Caco-2 (cell line): ENCODE measurements at regions of chr13 and their contacts with region 1.

Region 1: GRCh38 chr13:106418556-106418955 is 116.9 kb downstream of the EFNB2 start:
- DNase-seq: no peak
- H3K4me3 ChIP-seq: no peak overlapping the region
- H3K4me3 Mint-ChIP-seq: no peak overlapping the region
- H3K27ac Mint-ChIP-seq: no peak overlapping the region
- H3K4me1 ChIP-seq: peaks cover 4% of the 10 kb centered on the region; the same call in 1 of the 2 replicates
- H3K4me1 Mint-ChIP-seq: peaks cover 8% of the 10 kb centered on the region
- H3K27me3 ChIP-seq: no peaks in the 10 kb centered on the region
- H3K27me3 Mint-ChIP-seq: no peaks in the 10 kb centered on the region
- CTCF ChIP-seq: no peak

Region 2: GRCh38 chr13:105960326-105960725 is 458.2 kb before region 1 on chr13:
- CTCF ChIA-PET with region 1: no interaction called
- POLR2A ChIA-PET with region 1: no interaction called
- intact Hi-C with region 1: no loop called
- DNase-seq: no peak
- H3K4me3 ChIP-seq: no peak overlapping the region
- H3K4me3 Mint-ChIP-seq: no peak overlapping the region
- H3K27ac Mint-ChIP-seq: no peak overlapping the region
- H3K4me1 ChIP-seq: no peaks in the 10 kb centered on the region
- H3K4me1 Mint-ChIP-seq: no peaks in the 10 kb centered on the region
- H3K27me3 ChIP-seq: no peaks in the 10 kb centered on the region
- H3K27me3 Mint-ChIP-seq: no peaks in the 10 kb centered on the region
- CTCF ChIP-seq: no peak

Region 3: DNA sequence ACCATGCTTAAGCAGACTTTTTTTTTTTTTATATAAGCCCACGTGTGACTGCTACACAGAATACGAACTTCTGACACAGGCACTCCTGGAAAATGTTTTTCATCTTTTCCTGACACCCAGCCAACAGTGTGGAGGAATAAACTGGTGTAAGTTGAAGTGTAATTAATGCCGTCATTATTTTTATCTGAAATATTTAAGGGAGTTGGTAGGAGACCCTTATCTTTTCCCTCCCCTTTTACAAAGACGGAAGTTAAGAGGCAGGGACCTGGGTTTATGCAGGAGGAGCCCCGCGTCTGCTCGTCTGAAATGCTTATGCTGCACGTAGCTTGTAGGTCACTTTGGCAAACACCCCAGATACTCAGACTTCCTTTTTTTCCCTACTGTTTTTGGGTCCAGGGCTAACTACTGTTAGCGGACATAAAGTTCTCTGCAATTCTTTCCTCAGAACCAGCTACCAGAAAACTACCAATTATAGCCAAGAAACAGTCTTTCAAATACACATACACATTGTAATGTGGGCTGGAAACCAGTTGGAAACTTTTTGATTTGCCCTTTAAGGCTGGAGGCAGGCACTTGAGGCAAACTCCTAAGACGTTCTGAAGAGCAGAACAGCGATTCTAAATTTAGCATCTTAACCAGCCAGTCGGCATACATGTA is 66.1 kb after region 1 on chr13:
- CTCF ChIA-PET with region 1: no interaction called
- POLR2A ChIA-PET with region 1: no interaction called
- intact Hi-C with region 1: loop called (anchors 5 kb)
- DNase-seq: no peak
- H3K4me3 ChIP-seq: no peak overlapping the region
- H3K4me3 Mint-ChIP-seq: no peak overlapping the region
- H3K27ac Mint-ChIP-seq: no peak overlapping the region
- H3K4me1 ChIP-seq: peaks cover 17% of the 10 kb centered on the region
- H3K4me1 Mint-ChIP-seq: peaks cover 6% of the 10 kb centered on the region
- H3K27me3 ChIP-seq: no peaks in the 10 kb centered on the region
- H3K27me3 Mint-ChIP-seq: no peaks in the 10 kb centered on the region
- CTCF ChIP-seq: no peak

Region 4: DNA sequence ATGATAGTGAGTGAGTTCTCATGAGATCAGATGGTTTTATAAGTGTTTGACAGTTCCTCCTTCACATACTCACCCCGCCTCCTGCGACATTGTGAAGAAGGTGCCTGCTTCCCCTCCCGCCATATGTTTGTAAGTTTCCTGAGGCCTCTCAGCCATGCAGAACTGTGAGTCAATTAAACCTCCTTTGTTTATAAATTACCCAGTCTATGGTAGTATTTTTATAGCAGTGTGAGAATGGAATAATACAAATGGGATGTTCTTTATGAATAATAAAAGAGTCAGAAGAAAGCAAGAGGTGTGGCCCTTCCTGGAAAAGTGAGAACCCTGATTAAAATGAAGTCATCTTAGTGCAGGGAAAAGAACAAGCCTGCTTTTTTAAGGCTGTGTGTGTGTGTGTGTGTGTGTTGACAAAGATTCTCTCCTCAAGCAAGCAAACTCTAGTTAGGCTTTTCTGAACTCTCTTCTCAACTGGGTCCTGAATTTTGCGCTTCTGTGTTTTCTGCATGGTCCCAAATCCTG is 168.2 kb after region 1 on chr13:
- CTCF ChIA-PET with region 1: no interaction called
- POLR2A ChIA-PET with region 1: no interaction called
- intact Hi-C with region 1: no loop called
- DNase-seq: no peak
- H3K4me3 ChIP-seq: no peak overlapping the region
- H3K4me3 Mint-ChIP-seq: no peak overlapping the region
- H3K27ac Mint-ChIP-seq: no peak overlapping the region
- H3K4me1 ChIP-seq: peaks cover 12% of the 10 kb centered on the region
- H3K4me1 Mint-ChIP-seq: peaks cover 7% of the 10 kb centered on the region
- H3K27me3 ChIP-seq: no peaks in the 10 kb centered on the region
- H3K27me3 Mint-ChIP-seq: no peaks in the 10 kb centered on the region
- CTCF ChIP-seq: no peak